Activated T-helper 1 cell treated with anti-CD3 and anti-CD28 coated beads, Interleukin-12 subunit alpha, Interleukin-12 subunit beta, Interleukin-2, Interleukin-4 antibody, amounts not matched to agents 30 ng/mL and 10 ng/mL and 1 ng/mL, durations not matched to agents 14 hours and 24 hours and 36 hours (primary cell): ENCODE measurements at regions of chr9 and their contacts with region 1.

Region 1: GRCh38 chr9:6894135-6894534 is 136.4 kb downstream of the KDM4C start:
- DNase-seq: no peak
- H3K4me3 Mint-ChIP-seq: peak overlapping the region; percentile 32
- H3K27ac Mint-ChIP-seq: peak overlapping the region; percentile 61
- H3K4me1 Mint-ChIP-seq: peaks cover 33% of the 10 kb centered on the region
- H3K27me3 Mint-ChIP-seq: no peaks in the 10 kb centered on the region

Region 2: GRCh38 chr9:6703898-6704639 is 190.1 kb before region 1 on chr9:
- intact Hi-C with region 1: loop called (anchors 2 kb)
- DNase-seq: peak; percentile 84
- H3K4me3 Mint-ChIP-seq: peak overlapping the region; percentile 89
- H3K27ac Mint-ChIP-seq: peak overlapping the region; percentile 91
- H3K4me1 Mint-ChIP-seq: peaks cover 14% of the 10 kb centered on the region
- H3K27me3 Mint-ChIP-seq: peaks cover 4% of the 10 kb centered on the region

Region 3: GRCh38 chr9:6827439-6827838 is 66.7 kb before region 1 on chr9:
- intact Hi-C with region 1: loop called (anchors 1 kb)
- DNase-seq: peak; percentile 27
- H3K4me3 Mint-ChIP-seq: no peak overlapping the region
- H3K27ac Mint-ChIP-seq: peak overlapping the region; percentile 57
- H3K4me1 Mint-ChIP-seq: peaks cover 10% of the 10 kb centered on the region
- H3K27me3 Mint-ChIP-seq: no peaks in the 10 kb centered on the region

Region 4: DNA sequence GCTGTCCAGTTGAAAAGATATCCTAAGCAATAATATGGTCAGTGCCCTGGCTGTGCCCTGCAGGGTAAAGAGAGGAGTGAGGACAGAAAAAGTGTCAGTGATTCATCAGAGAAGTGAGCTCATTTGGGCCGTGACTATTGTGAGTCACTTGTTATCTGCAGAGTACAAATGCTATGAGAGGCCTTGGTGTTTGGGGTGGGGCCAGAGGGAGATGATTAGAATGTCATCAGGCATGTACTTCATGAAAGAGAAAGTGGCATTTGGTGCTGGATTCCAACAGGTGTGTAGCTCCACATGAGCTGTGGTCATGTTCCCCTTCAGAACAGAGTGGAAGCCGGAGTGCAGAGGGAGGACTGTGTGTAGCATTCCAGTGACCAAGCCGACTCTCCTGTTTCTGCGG is 37.8 kb after region 1 on chr9:
- intact Hi-C with region 1: no loop called
- DNase-seq: no peak
- H3K4me3 Mint-ChIP-seq: no peak overlapping the region
- H3K27ac Mint-ChIP-seq: no peak overlapping the region
- H3K4me1 Mint-ChIP-seq: no peaks in the 10 kb centered on the region
- H3K27me3 Mint-ChIP-seq: no peaks in the 10 kb centered on the region

Region 5: GRCh38 chr9:6955251-6955921 is 61.3 kb after region 1 on chr9:
- intact Hi-C with region 1: loop called (anchors 5 kb)
- DNase-seq: no peak
- H3K4me3 Mint-ChIP-seq: no peak overlapping the region
- H3K27ac Mint-ChIP-seq: no peak overlapping the region
- H3K4me1 Mint-ChIP-seq: no peaks in the 10 kb centered on the region
- H3K27me3 Mint-ChIP-seq: no peaks in the 10 kb centered on the region

Region 6: GRCh38 chr9:7216004-7216831 is 322.1 kb after region 1 on chr9:
- intact Hi-C with region 1: loop called (anchors 10 kb)
- DNase-seq: peak; percentile 59
- H3K4me3 Mint-ChIP-seq: peak overlapping the region; percentile 27
- H3K27ac Mint-ChIP-seq: peak overlapping the region; percentile 52
- H3K4me1 Mint-ChIP-seq: peaks cover 38% of the 10 kb centered on the region
- H3K27me3 Mint-ChIP-seq: peaks cover 24% of the 10 kb centered on the region

Region 7: GRCh38 chr9:7298123-7298522 is 404.0 kb after region 1 on chr9:
- intact Hi-C with region 1: loop called (anchors 1 kb)
- DNase-seq: peak; percentile 6
- H3K4me3 Mint-ChIP-seq: no peak overlapping the region
- H3K27ac Mint-ChIP-seq: peak overlapping the region; percentile 18
- H3K4me1 Mint-ChIP-seq: peaks cover 11% of the 10 kb centered on the region
- H3K27me3 Mint-ChIP-seq: peaks cover 18% of the 10 kb centered on the region